ENCODE measurements at regions of chr4 and their contacts with region 1.

Region 1: DNA sequence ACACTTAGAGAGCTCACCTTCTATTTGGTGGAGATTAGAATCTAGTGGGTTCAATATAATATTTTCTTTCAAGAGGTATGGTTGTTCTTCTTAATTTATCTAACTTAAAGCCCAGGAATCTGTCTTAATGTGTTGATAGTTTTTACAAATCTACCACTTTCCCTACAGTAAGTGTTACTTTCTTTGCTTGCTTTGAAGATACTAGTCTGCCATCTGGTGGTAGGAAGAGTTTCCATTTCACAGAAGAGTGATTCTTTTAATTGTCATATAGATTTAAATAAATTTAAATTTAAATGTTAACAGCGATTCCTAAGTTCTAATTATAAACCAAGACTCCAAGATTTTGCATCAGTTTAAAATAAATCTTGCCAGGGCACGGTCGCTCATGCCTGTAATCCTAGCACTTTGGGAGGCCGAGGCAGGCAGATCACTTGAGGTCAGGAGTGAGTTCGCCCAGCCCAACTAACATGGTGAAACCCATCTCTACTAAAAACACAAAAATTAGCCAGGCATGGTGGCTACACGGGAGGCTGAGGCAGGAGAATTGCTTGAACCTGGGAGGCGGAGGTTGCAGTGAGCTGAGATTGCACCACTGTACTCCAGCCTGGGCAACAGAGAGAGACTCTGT is 43.5 kb downstream of the NUDT9 start:
- DNase-seq: peak in 3 of 14 experiments; percentile 64 to 69 (median 68)
- ATAC-seq: peak; percentile 52
- H3K4me3 ChIP-seq: no peak overlapping the region
- H3K4me3 Mint-ChIP-seq: no peak overlapping the region
- H3K27ac ChIP-seq: no peak overlapping the region
- H3K27ac Mint-ChIP-seq: no peak overlapping the region
- H3K4me1 ChIP-seq: no peaks in the 10 kb centered on the region
- H3K4me1 Mint-ChIP-seq: no peaks in the 10 kb centered on the region
- H3K27me3 ChIP-seq: no peaks in the 10 kb centered on the region
- H3K27me3 Mint-ChIP-seq: no peaks in the 10 kb centered on the region
- CTCF ChIP-seq: peak; percentile 84

Region 2: DNA sequence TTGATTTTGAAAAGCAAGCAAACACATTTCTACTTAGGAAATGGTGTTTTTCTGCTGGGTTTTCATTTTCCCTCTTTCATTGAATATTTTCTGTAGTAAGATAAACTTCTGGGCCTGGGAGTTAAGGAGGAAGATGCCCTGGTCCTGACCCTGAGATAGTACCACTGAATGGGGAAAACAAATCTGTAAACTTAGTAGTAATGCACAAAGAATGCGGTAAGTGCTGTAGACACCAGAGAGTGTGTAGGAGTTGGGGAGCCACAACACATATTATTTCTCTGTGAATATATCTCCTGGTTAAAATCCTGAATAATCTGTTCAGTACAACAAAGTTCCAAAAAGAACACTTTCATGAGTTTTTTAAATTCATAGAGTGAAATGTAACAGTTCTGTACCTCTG is 1284.3 kb before region 1 on chr4:
- CTCF ChIA-PET with region 1: no interaction called
- POLR2A ChIA-PET with region 1: no interaction called
- intact Hi-C with region 1: no loop called
- DNase-seq: no peak
- ATAC-seq: no peak
- H3K4me3 ChIP-seq: no peak overlapping the region
- H3K4me3 Mint-ChIP-seq: no peak overlapping the region
- H3K27ac ChIP-seq: no peak overlapping the region
- H3K27ac Mint-ChIP-seq: no peak overlapping the region
- H3K4me1 ChIP-seq: no peaks in the 10 kb centered on the region
- H3K4me1 Mint-ChIP-seq: no peaks in the 10 kb centered on the region
- H3K27me3 ChIP-seq: no peaks in the 10 kb centered on the region
- H3K27me3 Mint-ChIP-seq: no peaks in the 10 kb centered on the region
- CTCF ChIP-seq: no peak

Region 3: DNA sequence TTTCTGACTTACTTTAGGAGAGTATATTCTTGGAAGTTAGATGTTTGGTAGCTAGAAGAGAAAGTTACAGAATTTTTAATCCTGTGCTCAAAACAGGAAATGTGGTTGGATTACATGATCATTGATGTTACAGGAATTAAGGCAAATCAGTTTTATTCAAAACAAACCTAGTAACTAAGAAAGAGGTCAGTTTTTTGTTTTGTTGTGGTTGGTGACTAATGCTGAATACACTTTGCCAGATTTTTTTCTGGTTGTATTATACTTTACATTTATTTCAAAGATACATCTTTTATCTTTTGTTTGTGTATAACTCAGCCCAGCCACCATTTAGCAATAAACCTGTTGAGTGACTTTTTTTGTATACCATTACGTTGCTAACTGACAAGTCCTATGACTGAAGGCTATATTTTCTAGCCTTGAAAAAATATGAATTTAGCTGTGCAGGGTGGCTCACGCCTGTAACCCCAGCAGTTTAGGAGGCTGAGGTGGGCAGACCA is 362.1 kb before region 1 on chr4:
- CTCF ChIA-PET with region 1: no interaction called
- POLR2A ChIA-PET with region 1: no interaction called
- intact Hi-C with region 1: no loop called
- DNase-seq: peak in 4 of 14 experiments; percentile 8 to 75 (median 70)
- ATAC-seq: peak; percentile 77
- H3K4me3 ChIP-seq: no peak overlapping the region
- H3K4me3 Mint-ChIP-seq: peak overlapping the region; percentile 78
- H3K27ac ChIP-seq: peak overlapping the region; percentile 78 to 88
- H3K27ac Mint-ChIP-seq: peak overlapping the region; percentile 93
- H3K4me1 ChIP-seq: peaks cover 16% of the 10 kb centered on the region
- H3K4me1 Mint-ChIP-seq: peaks cover 67% of the 10 kb centered on the region
- H3K27me3 ChIP-seq: no peaks in the 10 kb centered on the region
- H3K27me3 Mint-ChIP-seq: no peaks in the 10 kb centered on the region
- CTCF ChIP-seq: no peak

Region 4: DNA sequence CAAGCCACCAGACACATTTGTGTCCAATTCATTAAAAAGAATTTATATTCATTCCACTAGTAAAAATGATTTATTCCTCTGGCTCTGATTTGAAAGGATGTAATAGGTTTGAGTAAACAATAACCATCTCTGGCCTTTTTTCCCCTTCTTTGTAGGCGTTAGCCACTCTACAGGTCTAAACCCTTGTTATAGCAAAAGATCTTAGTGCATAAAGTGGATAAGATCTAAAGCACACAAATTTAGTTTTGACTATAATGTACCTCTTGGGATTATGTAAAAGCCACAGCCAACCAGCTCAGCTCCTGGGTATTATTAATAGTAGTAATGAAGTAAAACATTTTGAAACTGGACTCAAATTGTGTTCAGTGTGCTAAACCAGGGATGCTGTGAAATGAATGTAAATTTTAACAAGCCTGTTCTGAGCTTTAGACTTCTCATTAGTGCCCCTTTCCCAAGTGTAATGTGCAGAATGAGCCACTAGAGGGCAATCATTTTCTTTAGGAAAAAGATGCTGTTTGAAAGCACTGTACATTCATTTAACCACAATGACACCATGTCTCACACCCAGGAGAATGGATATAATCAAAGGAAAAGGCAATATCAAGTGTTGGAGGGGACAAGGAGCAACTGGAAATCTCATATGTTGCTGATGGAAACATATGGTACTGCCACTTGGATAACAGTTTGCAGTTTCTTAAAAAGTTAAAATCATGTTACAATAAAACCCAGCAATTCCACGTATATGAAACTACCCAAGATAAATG is 315.2 kb before region 1 on chr4:
- CTCF ChIA-PET with region 1: interaction called, 4 read pairs
- POLR2A ChIA-PET with region 1: no interaction called
- intact Hi-C with region 1: loop called (anchors 1 to 2 kb)
- DNase-seq: peak in 10 of 14 experiments; percentile 14 to 79 (median 42)
- ATAC-seq: peak; percentile 84
- H3K4me3 ChIP-seq: no peak overlapping the region
- H3K4me3 Mint-ChIP-seq: no peak overlapping the region
- H3K27ac ChIP-seq: no peak overlapping the region
- H3K27ac Mint-ChIP-seq: no peak overlapping the region
- H3K4me1 ChIP-seq: no peaks in the 10 kb centered on the region
- H3K4me1 Mint-ChIP-seq: no peaks in the 10 kb centered on the region
- H3K27me3 ChIP-seq: no peaks in the 10 kb centered on the region
- H3K27me3 Mint-ChIP-seq: no peaks in the 10 kb centered on the region
- CTCF ChIP-seq: peak; percentile 97

Region 5: DNA sequence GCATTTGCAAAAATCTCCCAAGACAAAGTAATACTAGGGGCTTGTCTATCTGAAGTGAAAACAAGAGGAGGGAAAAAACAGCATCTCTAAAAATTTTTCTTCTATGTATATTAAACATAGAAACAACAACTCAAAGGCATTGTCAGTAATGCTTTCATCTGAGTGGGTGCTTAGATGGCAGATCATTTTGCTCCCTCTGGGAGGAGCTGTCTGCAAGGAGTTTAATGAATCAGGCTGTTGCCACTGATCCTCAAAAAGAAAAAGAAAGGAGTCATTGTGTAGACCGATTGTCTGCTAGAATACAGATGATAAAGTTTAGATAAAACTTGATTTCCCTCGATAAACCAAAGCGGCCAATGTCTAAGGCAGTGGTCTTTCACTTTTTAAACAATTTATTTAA is 195.7 kb before region 1 on chr4:
- CTCF ChIA-PET with region 1: no interaction called
- POLR2A ChIA-PET with region 1: no interaction called
- intact Hi-C with region 1: loop called (anchors 1 to 5 kb)
- DNase-seq: peak in 4 of 14 experiments; percentile 6 to 13 (median 8)
- ATAC-seq: no peak
- H3K4me3 ChIP-seq: no peak overlapping the region
- H3K4me3 Mint-ChIP-seq: no peak overlapping the region
- H3K27ac ChIP-seq: no peak overlapping the region
- H3K27ac Mint-ChIP-seq: no peak overlapping the region
- H3K4me1 ChIP-seq: no peaks in the 10 kb centered on the region
- H3K4me1 Mint-ChIP-seq: no peaks in the 10 kb centered on the region
- H3K27me3 ChIP-seq: peaks cover 0 to 5% of the 10 kb centered on the region in 2 experiments
- H3K27me3 Mint-ChIP-seq: peaks cover 9% of the 10 kb centered on the region
- CTCF ChIP-seq: no peak

Region 6: GRCh38 chr4:87353592-87353991 is 112.3 kb before region 1 on chr4:
- CTCF ChIA-PET with region 1: interaction called, 9 read pairs
- POLR2A ChIA-PET with region 1: no interaction called
- intact Hi-C with region 1: loop called (anchors 5 kb)
- DNase-seq: peak in 13 of 14 experiments; percentile 4 to 63 (median 32)
- ATAC-seq: peak; percentile 74
- H3K4me3 ChIP-seq: no peak overlapping the region
- H3K4me3 Mint-ChIP-seq: no peak overlapping the region
- H3K27ac ChIP-seq: no peak overlapping the region
- H3K27ac Mint-ChIP-seq: no peak overlapping the region
- H3K4me1 ChIP-seq: no peaks in the 10 kb centered on the region
- H3K4me1 Mint-ChIP-seq: peaks cover 6% of the 10 kb centered on the region
- H3K27me3 ChIP-seq: no peaks in the 10 kb centered on the region
- H3K27me3 Mint-ChIP-seq: no peaks in the 10 kb centered on the region
- CTCF ChIP-seq: peak; percentile 81

Region 7: GRCh38 chr4:87375719-87376291 is 90.0 kb before region 1 on chr4:
- CTCF ChIA-PET with region 1: interaction called, 44 read pairs
- POLR2A ChIA-PET with region 1: no interaction called
- intact Hi-C with region 1: no loop called
- DNase-seq: peak in 4 of 14 experiments; percentile 11 to 63 (median 50)
- ATAC-seq: no peak
- H3K4me3 ChIP-seq: no peak overlapping the region
- H3K4me3 Mint-ChIP-seq: no peak overlapping the region
- H3K27ac ChIP-seq: no peak overlapping the region
- H3K27ac Mint-ChIP-seq: no peak overlapping the region
- H3K4me1 ChIP-seq: no peaks in the 10 kb centered on the region
- H3K4me1 Mint-ChIP-seq: peaks cover 6% of the 10 kb centered on the region
- H3K27me3 ChIP-seq: no peaks in the 10 kb centered on the region
- H3K27me3 Mint-ChIP-seq: no peaks in the 10 kb centered on the region
- CTCF ChIP-seq: no peak

Measured in CD4-positive, alpha-beta T cell (primary cell).